ENCODE measurements at regions of chr4 and their contacts with region 1.

Region 1: GRCh38 chr4:145099653-145100052 is 1.5 kb downstream of the ABCE1 start:
- DNase-seq: no peak
- H3K4me3 ChIP-seq: peak overlapping the region in 1 of 4 donors; percentile 78
- H3K27ac ChIP-seq: peak overlapping the region in 1 of 4 donors; percentile 97
- H3K4me1 ChIP-seq: peaks cover 19 to 47% (median 28%) of the 10 kb centered on the region in 4 donors
- H3K27me3 ChIP-seq: no peaks in the 10 kb centered on the region
- CTCF ChIP-seq: no peak
- EP300 ChIP-seq: no peak
- POLR2A ChIP-seq: no peak

Region 2: GRCh38 chr4:143513306-143514168 is 1586.1 kb before region 1 on chr4 and contains the start of gene SMARCA5:
- in situ Hi-C with region 1: loop called in 1 of 4 experiments (anchors 25 kb)
- intact Hi-C with region 1: no loop called
- DNase-seq: peak; percentile 97
- H3K4me3 ChIP-seq: peak within 1 kb of the TSS; percentile 67 to 98 (median 90)
- H3K27ac ChIP-seq: peak within 1 kb of the TSS; percentile 96 to 100 (median 98)
- H3K4me1 ChIP-seq: peaks cover 18 to 36% (median 24%) of the 10 kb centered on the region in 4 donors
- H3K27me3 ChIP-seq: no peaks in the 10 kb centered on the region
- CTCF ChIP-seq: peak in 1 of 5 experiments; percentile 8
- EP300 ChIP-seq: no peak
- POLR2A ChIP-seq: peak; percentile 96
- total RNA-seq, gene SMARCA5: 12.3 to 44.1 (median 29.8) TPM